MCF 10A (cell line): ENCODE measurements at regions of chr1 and their contacts with region 1.

Region 1: DNA sequence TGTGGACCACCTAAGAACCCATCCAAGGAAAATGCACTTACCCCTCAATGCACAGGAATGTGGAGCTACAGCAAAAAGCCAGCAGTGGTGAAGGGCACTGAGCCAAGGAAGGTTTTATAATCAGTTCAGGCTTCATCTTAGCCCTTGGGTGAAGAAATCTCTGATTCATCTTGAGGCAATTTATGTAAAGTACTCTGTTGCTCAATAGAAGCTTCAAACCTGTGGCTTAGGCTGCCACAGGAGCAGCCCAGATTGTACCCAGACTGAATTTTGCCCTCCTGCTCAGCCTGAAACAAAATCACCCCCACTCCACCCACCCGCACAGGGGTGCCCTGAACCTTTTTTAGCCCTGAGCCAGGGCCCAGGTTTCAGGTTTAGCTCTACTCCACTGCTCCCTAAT is at the start of gene S100A12:
- DNase-seq: peak; percentile 98
- H3K4me3 Mint-ChIP-seq: no peak within 1 kb of the TSS
- H3K27ac Mint-ChIP-seq: peak within 1 kb of the TSS; percentile 28
- H3K4me1 Mint-ChIP-seq: peaks cover 43% of the 10 kb centered on the region
- H3K27me3 Mint-ChIP-seq: no peaks in the 10 kb centered on the region
- CTCF ChIP-seq: no peak
- total RNA-seq, gene S100A12: not detected in 2 replicates

Region 2: GRCh38 chr1:153365303-153366095 is 10.0 kb before region 1 on chr1:
- CTCF ChIA-PET with region 1: interaction called, 14 read pairs
- POLR2A ChIA-PET with region 1: interaction called, 46 read pairs
- intact Hi-C with region 1: no loop called
- DNase-seq: peak; percentile 95
- H3K4me3 Mint-ChIP-seq: peak overlapping the region; percentile 17
- H3K27ac Mint-ChIP-seq: peak overlapping the region; percentile 46
- H3K4me1 Mint-ChIP-seq: peaks cover 56% of the 10 kb centered on the region
- H3K27me3 Mint-ChIP-seq: no peaks in the 10 kb centered on the region
- CTCF ChIP-seq: no peak

Region 3: DNA sequence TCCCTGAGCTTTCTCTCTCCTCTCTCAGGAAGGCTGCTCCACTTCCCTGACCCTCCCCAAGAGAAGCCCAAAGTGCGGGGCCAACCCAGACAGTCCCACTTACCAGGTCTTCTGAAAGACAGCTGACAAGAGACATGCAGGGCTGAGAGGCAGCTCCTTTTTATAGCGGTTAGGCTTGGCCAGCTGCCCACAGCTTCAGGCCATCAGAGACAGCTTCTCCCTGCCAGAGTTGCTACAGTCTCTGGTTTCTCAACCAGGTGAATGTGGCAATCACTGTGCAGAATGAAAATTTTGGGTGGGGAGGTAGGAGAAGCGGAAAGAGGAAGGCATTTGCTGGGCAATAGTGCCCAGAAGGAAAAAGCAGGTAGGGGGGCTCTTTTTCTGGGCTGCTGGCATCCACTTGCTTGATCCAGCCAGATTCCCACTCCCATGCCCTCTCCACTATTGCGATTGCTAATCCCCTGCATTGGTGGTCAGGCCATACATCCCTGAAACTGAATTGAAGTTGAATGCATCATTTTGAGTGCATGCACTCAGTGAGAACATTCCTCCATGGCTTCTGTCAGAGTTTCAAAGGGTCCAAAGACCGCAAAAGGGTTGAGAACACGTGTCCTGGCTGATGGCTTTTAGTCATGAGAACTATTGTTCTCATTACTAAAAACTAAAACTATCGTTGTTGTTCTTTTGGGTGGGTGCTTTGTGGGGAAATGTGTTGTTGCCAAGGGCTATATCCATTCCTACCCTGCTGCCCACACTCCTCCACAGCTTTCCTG is 15.6 kb after region 1 on chr1 and contains the start of gene S100A8:
- CTCF ChIA-PET with region 1: interaction called, 3 read pairs
- POLR2A ChIA-PET with region 1: interaction called, 60 read pairs
- intact Hi-C with region 1: loop called (anchors 2 kb)
- DNase-seq: peak; percentile 99
- H3K4me3 Mint-ChIP-seq: peak within 1 kb of the TSS; percentile 66
- H3K27ac Mint-ChIP-seq: peak within 1 kb of the TSS; percentile 2
- H3K4me1 Mint-ChIP-seq: peaks cover 71% of the 10 kb centered on the region
- H3K27me3 Mint-ChIP-seq: no peaks in the 10 kb centered on the region
- CTCF ChIP-seq: no peak
- total RNA-seq, gene S100A8: 46.9 and 80.4 TPM in 2 replicates

Region 4: GRCh38 chr1:153422450-153423068 is 47.0 kb after region 1 on chr1:
- CTCF ChIA-PET with region 1: no interaction called
- POLR2A ChIA-PET with region 1: no interaction called
- intact Hi-C with region 1: no loop called
- DNase-seq: peak; percentile 84
- H3K4me3 Mint-ChIP-seq: no peak overlapping the region
- H3K27ac Mint-ChIP-seq: no peak overlapping the region
- H3K4me1 Mint-ChIP-seq: no peaks in the 10 kb centered on the region
- H3K27me3 Mint-ChIP-seq: peaks cover 86% of the 10 kb centered on the region
- CTCF ChIP-seq: no peak

Region 5: GRCh38 chr1:153532769-153533599 is 157.5 kb after region 1 on chr1:
- CTCF ChIA-PET with region 1: no interaction called
- POLR2A ChIA-PET with region 1: no interaction called
- intact Hi-C with region 1: no loop called
- DNase-seq: peak; percentile 97
- H3K4me3 Mint-ChIP-seq: peak overlapping the region; percentile 99
- H3K27ac Mint-ChIP-seq: peak overlapping the region; percentile 75
- H3K4me1 Mint-ChIP-seq: peaks cover 47% of the 10 kb centered on the region
- H3K27me3 Mint-ChIP-seq: no peaks in the 10 kb centered on the region
- CTCF ChIP-seq: peak; percentile 93